ENCODE measurements at regions of chr17 and their contacts with region 1.

Region 1: GRCh38 chr17:69523244-69523861 is 108.9 kb downstream of the MAP2K6 start:
- DNase-seq: peak in 1 of 5 donors; percentile 20
- ATAC-seq: peak in 2 of 4 donors; percentile 72 to 73
- H3K4me3 ChIP-seq: no peak overlapping the region
- H3K27ac ChIP-seq: no peak overlapping the region
- H3K4me1 ChIP-seq: no peaks in the 10 kb centered on the region
- H3K27me3 ChIP-seq: no peaks in the 10 kb centered on the region
- CTCF ChIP-seq: peak; percentile 55 to 74 (median 66)
- POLR2A ChIP-seq: no peak

Region 2: GRCh38 chr17:69235338-69235930 is 287.9 kb before region 1 on chr17:
- intact Hi-C with region 1: no loop called
- DNase-seq: peak; percentile 68 to 82 (median 80)
- ATAC-seq: peak; percentile 79 to 95 (median 93)
- H3K4me3 ChIP-seq: no peak overlapping the region
- H3K27ac ChIP-seq: peak overlapping the region in 1 of 12 donors; percentile 9
- H3K4me1 ChIP-seq: peaks cover 0 to 7% (median 0%) of the 10 kb centered on the region in 12 donors
- H3K27me3 ChIP-seq: no peaks in the 10 kb centered on the region
- CTCF ChIP-seq: peak; percentile 63 to 85 (median 76)
- POLR2A ChIP-seq: no peak

Region 3: DNA sequence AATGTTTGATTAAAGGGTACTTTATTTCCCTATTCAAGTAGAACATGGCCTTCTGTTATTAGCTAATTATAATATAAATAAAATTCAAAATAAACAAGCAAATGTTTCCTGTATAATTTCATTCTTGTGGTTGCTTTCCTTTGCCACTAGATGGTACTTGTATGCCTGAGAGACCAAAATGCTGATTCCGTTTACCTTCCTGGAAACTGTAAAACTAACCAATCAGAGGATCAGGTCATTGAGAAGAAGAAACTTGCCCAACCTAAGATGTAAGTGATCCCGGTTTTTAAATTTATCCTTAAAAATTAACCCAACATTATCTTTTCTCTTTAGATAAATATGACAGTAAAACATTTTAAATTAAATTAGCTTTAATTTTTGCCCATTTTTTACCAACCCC is 188.3 kb before region 1 on chr17:
- intact Hi-C with region 1: loop called in 9 of 10 experiments (anchors 1 to 5 kb)
- DNase-seq: no peak
- ATAC-seq: peak in 1 of 4 donors; percentile 43
- H3K4me3 ChIP-seq: no peak overlapping the region
- H3K27ac ChIP-seq: no peak overlapping the region
- H3K4me1 ChIP-seq: no peaks in the 10 kb centered on the region
- H3K27me3 ChIP-seq: no peaks in the 10 kb centered on the region
- CTCF ChIP-seq: peak; percentile 24 to 55 (median 44)
- POLR2A ChIP-seq: no peak

Region 4: DNA sequence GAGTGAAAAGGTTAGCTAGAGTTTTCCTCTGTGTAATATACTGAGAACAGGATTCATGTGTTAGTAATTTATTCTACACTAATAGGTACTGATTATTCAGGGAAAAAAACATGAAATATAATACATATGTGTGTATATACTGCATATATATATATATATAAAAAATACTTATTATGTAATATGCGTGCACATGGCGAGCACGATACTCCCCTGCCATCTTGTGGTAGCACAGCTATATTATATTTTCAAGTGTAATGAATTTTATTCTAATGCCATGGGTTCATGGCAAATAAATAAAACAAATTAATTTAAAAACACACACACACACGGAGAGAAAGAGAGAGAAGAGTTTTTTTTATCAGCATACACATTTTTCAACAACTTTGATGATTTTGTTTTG is 1106.5 kb after region 1 on chr17:
- intact Hi-C with region 1: loop called in 4 of 10 experiments (anchors 5 to 10 kb)
- DNase-seq: no peak
- ATAC-seq: no peak
- H3K4me3 ChIP-seq: no peak overlapping the region
- H3K27ac ChIP-seq: no peak overlapping the region
- H3K4me1 ChIP-seq: no peaks in the 10 kb centered on the region
- H3K27me3 ChIP-seq: no peaks in the 10 kb centered on the region
- CTCF ChIP-seq: peak in 11 of 12 donors; percentile 20 to 51 (median 41)
- POLR2A ChIP-seq: no peak